ENCODE measurements at regions of chr6 and their contacts with region 1.

Region 1: GRCh38 chr6:117449549-117450439 is 24.1 kb upstream of the ROS1 start:
- DNase-seq: no peak
- H3K4me3 ChIP-seq: no peak overlapping the region
- H3K27ac ChIP-seq: no peak overlapping the region
- H3K4me1 ChIP-seq: peaks cover 0 to 17% (median 9%) of the 10 kb centered on the region in 3 donors
- H3K27me3 ChIP-seq: peaks cover 0 to 30% (median 0%) of the 10 kb centered on the region in 4 donors
- CTCF ChIP-seq: peak; percentile 60 to 81 (median 68)
- POLR2A ChIP-seq: no peak

Region 2: GRCh38 chr6:117549611-117550010 is 99.8 kb after region 1 on chr6:
- intact Hi-C with region 1: loop called (anchors 5 kb)
- DNase-seq: no peak
- H3K4me3 ChIP-seq: no peak overlapping the region
- H3K27ac ChIP-seq: no peak overlapping the region
- H3K4me1 ChIP-seq: peaks cover 0 to 30% (median 0%) of the 10 kb centered on the region in 3 donors
- H3K27me3 ChIP-seq: no peaks in the 10 kb centered on the region
- CTCF ChIP-seq: no peak
- POLR2A ChIP-seq: no peak

Region 3: DNA sequence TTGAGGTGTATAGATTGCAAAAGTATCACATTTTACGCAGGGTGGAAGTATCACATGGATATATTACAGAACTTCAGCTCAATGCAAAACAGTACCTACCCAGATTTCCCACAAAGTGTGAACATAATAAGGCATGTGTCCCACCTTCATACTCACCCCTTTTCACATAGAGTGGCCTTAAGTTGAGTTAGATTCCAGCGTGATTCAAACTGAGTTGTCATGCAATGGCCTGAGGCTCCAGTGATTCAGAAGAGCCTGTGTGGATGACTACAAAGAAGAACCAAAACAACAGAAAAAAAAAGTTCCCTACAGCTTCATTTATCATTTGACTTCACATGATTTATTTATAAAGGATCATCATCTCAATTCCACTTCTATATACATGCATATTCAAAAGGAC is 767.0 kb after region 1 on chr6:
- intact Hi-C with region 1: no loop called
- DNase-seq: no peak
- H3K4me3 ChIP-seq: no peak overlapping the region
- H3K27ac ChIP-seq: no peak overlapping the region
- H3K4me1 ChIP-seq: no peaks in the 10 kb centered on the region
- H3K27me3 ChIP-seq: no peaks in the 10 kb centered on the region
- CTCF ChIP-seq: no peak
- POLR2A ChIP-seq: no peak